ENCODE measurements at regions of chr14 and their contacts with region 1.

Region 1: DNA sequence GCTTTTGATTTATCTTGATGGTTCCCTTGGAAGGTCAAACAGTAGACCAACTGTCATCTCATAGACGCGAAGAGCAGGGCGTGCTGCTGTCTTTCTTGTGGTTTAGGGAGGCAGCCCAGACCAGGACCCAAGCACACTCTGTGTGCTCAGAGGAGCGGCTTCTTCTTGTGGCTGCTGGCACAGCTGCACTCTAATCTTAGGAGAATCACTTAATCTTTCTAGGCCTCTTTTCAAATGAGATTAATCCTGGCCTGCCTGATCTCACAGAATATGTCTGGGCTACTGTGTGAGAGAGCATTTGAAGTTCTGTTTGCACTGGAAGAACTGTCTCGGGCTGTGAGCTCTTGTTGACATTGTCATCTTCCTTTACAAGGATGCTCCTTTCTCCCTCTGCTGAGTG is 60.0 kb upstream of the TRAF3 start:
- DNase-seq: no peak
- ATAC-seq: no peak
- H3K4me3 Mint-ChIP-seq: no peak overlapping the region
- H3K27ac Mint-ChIP-seq: no peak overlapping the region
- H3K4me1 Mint-ChIP-seq: peaks cover 10% of the 10 kb centered on the region
- H3K27me3 Mint-ChIP-seq: no peaks in the 10 kb centered on the region

Region 2: DNA sequence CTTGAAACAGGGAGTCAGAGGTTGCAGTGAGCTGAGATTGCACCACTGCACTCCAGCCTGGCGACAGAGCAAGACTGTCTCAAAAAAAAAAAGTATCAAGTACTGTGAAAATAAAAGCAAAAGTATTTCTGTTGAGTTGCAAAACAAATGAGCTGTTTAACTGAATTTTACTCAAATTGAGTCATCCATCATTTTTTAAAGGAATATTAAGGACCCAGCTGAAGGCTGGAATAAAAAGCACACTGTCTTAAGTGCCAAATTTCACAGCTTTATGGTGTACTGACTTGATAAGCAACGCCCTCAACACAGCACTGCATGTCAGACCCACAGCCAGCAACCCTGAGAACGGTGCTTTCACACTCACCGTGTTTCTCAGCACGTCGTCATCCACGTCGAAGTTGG is 263.1 kb after region 1 on chr14:
- CTCF ChIA-PET with region 1: interaction called, 10 read pairs
- POLR2A ChIA-PET with region 1: no interaction called
- intact Hi-C with region 1: no loop called
- DNase-seq: no peak
- ATAC-seq: no peak
- H3K4me3 Mint-ChIP-seq: no peak overlapping the region
- H3K27ac Mint-ChIP-seq: no peak overlapping the region
- H3K4me1 Mint-ChIP-seq: peaks cover 5% of the 10 kb centered on the region
- H3K27me3 Mint-ChIP-seq: no peaks in the 10 kb centered on the region

Region 3: DNA sequence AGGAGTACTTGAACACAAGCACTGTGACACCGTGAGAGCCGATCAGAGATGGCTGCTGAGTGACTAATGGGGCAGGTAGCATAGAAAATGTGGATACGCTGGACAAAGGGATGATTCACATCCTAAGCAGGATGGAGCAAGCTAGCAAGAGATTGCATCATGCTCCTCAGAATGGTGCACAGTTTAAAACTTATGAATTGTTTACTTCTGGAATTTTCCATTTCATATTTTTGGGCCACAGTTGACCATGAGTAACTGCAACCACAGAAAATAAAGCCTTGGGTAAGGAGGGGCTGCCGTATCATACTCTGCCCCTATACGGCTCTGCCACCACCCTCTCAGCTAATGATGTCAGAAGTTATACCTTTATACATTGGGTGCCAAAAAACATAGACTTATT is 644.6 kb after region 1 on chr14:
- CTCF ChIA-PET with region 1: no interaction called
- POLR2A ChIA-PET with region 1: no interaction called
- intact Hi-C with region 1: no loop called
- DNase-seq: peak; percentile 54
- ATAC-seq: peak; percentile 75
- H3K4me3 Mint-ChIP-seq: no peak overlapping the region
- H3K27ac Mint-ChIP-seq: peak overlapping the region; percentile 81
- H3K4me1 Mint-ChIP-seq: peaks cover 5% of the 10 kb centered on the region
- H3K27me3 Mint-ChIP-seq: peaks cover 6% of the 10 kb centered on the region